HAP-1 (cell line): ENCODE measurements at regions of chr5 and their contacts with region 1.

Region 1: DNA sequence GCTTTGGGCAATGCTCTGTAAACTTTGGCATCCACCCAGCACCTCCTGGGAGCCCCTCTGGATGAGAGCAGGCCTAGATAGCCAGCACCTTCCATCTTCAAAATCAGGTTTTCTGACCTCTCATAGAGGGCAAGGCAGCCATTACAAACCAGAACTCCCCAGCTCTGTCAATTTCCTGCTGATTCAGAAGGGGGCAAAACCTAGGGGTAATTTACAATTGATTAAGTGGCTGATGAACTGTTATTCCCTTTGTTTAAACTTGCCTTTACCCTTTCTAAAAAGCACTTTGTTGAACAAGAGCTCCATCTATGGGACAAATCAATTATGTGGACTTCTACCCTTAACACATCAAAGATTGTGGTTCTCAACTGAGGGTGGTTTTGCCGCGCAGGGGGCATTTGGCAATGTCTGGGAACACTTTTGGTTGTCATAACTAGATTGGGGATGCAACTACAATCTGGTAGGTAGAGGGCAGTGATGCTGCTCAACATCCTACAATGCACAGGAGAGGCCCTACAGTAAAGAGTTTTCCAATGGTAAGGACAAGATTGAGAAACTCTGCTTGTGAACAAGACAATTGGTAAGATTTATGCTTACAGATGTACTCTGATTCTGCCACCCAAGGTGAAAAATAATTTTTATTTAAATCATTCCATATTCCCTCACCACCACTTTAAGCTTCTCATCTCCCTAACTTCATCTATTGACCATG is 184.1 kb downstream of the MARCHF11 start:
- DNase-seq: peak; percentile 20 to 44
- H3K4me3 ChIP-seq: no peak overlapping the region
- H3K4me1 ChIP-seq: no peaks in the 10 kb centered on the region
- H3K27me3 ChIP-seq: no peaks in the 10 kb centered on the region

Region 2: GRCh38 chr5:15807871-15808270 is 187.6 kb before region 1 on chr5:
- in situ Hi-C with region 1: loop called (anchors 25 kb)
- DNase-seq: no peak
- H3K4me3 ChIP-seq: no peak overlapping the region
- H3K4me1 ChIP-seq: no peaks in the 10 kb centered on the region
- H3K27me3 ChIP-seq: no peaks in the 10 kb centered on the region

Region 3: GRCh38 chr5:16143381-16144049 is 148.0 kb after region 1 on chr5:
- in situ Hi-C with region 1: no loop called
- DNase-seq: no peak
- H3K4me3 ChIP-seq: no peak overlapping the region
- H3K4me1 ChIP-seq: no peaks in the 10 kb centered on the region
- H3K27me3 ChIP-seq: no peaks in the 10 kb centered on the region